ENCODE measurements at regions of chr16 and their contacts with region 1.

Region 1: DNA sequence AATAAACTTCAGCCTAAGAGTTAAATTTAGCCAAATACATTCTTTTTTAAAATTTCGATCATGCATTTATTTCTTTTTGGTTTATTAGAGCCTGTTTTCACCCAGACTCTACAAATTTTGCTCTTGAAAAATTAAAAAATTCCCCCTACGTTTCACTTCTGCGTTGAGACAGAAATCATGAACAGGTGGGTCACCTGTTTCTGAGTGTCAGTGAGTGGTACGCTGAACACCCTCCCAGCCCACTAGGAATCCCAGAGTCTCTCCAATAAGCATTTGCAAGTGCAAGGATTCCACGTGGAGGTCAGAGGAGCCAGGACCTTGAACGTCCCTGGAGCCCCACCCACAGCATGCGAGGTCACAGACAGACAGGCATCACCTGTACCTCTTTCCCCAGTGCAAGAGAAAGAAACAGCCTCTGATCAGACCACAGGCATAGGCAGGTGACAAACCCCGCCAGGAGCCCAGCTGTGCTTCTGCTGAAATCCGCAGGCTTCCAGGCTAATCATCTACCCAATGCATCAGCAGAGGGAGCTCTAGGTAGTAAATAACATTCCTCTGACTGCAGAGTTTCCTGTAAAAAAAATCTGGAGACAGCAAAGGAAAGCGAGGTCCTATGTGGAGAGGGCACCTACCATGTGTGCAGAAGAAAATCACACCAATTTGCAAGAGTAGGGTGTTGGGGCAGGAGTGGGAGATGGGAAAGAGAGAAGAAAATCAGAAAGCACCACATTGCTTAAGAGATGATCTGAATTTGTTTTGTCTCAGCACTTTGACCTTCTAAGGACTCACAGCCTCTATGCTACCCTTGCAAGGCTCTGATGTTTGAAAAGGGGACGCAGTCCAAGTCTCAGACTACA is 5.9 kb upstream of the XYLT1 start:
- DNase-seq: no peak
- ATAC-seq: peak; percentile 75

Region 2: GRCh38 chr16:17301593-17302135 is 175.0 kb before region 1 on chr16:
- intact Hi-C with region 1: loop called (anchors 10 kb)
- DNase-seq: no peak
- ATAC-seq: no peak

Region 3: GRCh38 chr16:17578921-17579874 is 102.6 kb after region 1 on chr16:
- intact Hi-C with region 1: loop called (anchors 10 kb)
- DNase-seq: peak; percentile 80
- ATAC-seq: peak; percentile 96

Measured in sciatic nerve (tissue), 2 donors.